Activated CD4-positive, alpha-beta T cell treated with anti-CD3 and anti-CD28 coated beads, Interleukin-2, amount 10 ng/mL, durations not matched to agents 7 days and 5 days (primary cell): ENCODE measurements at regions of chr7 and their contacts with region 1.

Region 1: GRCh38 chr7:140364819-140365218 is 33.5 kb downstream of the SLC37A3 start:
- DNase-seq: no peak
- H3K4me3 Mint-ChIP-seq: no peak overlapping the region
- H3K27ac Mint-ChIP-seq: peak overlapping the region; percentile 5
- H3K4me1 Mint-ChIP-seq: peaks cover 14% of the 10 kb centered on the region
- H3K27me3 Mint-ChIP-seq: no peaks in the 10 kb centered on the region

Region 2: GRCh38 chr7:140159487-140159886 is 205.3 kb before region 1 on chr7:
- CTCF ChIA-PET with region 1: no interaction called
- POLR2A ChIA-PET with region 1: no interaction called
- DNase-seq: no peak
- H3K4me3 Mint-ChIP-seq: no peak overlapping the region
- H3K27ac Mint-ChIP-seq: no peak overlapping the region
- H3K4me1 Mint-ChIP-seq: peaks cover 62% of the 10 kb centered on the region
- H3K27me3 Mint-ChIP-seq: no peaks in the 10 kb centered on the region

Region 3: DNA sequence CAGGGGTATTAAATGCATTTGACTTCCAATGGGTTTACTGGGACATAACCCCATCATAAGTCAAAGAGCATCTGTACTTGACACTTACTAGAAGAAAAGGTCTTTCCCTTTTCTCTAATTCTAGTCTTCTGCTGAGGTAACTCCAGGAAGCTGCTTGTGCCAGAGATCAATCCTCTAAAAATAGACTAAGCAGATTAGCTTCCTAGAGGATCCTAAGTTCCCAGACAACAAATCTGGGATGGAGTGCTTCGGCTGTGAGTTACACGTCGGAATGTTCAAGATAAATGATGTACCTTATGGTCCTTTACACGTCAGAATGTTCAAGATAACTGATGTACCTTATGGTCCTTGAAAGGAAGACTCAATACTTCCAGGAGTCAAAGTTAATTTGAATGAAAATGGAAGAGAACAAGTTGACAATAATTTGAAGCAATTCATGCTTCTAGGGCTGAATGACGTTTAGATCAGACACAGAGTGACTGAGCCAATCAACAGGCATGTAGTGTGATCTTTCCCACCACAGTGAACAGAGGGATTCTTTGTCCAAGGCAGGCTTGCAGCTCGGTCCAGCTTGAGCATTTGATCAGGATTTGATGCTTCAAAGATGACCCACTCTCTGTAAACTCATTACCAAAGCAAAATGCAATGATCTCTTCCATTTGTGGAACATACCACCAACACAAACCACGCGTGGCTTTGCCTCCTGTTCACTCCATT is 30.3 kb before region 1 on chr7:
- CTCF ChIA-PET with region 1: no interaction called
- POLR2A ChIA-PET with region 1: no interaction called
- DNase-seq: no peak
- H3K4me3 Mint-ChIP-seq: no peak overlapping the region
- H3K27ac Mint-ChIP-seq: no peak overlapping the region
- H3K4me1 Mint-ChIP-seq: no peaks in the 10 kb centered on the region
- H3K27me3 Mint-ChIP-seq: no peaks in the 10 kb centered on the region

Region 4: DNA sequence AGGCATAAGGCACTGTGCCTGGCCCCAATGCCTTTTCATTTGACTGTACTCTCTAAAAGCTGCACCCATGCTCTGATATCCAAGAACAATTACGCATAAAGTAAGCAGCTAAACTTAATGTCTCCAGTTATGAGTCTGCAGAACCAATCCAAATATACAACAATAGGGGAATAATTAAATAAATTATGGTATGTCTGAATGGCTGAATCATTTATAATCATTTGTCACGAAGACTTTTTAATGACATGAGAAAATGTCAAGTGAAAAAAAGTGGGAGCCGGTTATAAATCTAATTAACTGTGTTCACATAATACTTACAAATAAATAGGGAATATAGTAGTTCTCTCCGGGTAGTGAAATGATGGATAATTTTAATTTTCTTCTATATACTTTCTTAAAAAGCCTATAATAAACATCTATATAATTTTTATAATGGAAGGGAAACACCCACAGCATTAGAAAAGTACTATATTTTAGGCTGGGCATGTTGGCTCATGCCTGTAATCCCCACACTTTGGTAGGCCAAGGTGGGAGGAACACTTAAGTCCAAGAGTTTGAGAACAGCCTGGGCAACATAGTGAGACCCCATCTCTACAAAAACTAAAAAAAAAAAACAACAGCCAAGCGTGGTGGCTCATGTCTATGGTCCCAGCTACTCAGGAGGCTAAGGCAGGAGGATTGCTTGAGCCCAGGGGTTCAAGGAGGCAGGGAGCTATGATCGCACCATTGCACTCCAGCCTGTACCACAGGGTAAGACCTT is 19.3 kb after region 1 on chr7:
- CTCF ChIA-PET with region 1: interaction called, 10 read pairs
- POLR2A ChIA-PET with region 1: no interaction called
- DNase-seq: no peak
- H3K4me3 Mint-ChIP-seq: no peak overlapping the region
- H3K27ac Mint-ChIP-seq: no peak overlapping the region
- H3K4me1 Mint-ChIP-seq: peaks cover 31% of the 10 kb centered on the region
- H3K27me3 Mint-ChIP-seq: no peaks in the 10 kb centered on the region